ENCODE measurements at regions of chr17 and their contacts with region 1.

Region 1: DNA sequence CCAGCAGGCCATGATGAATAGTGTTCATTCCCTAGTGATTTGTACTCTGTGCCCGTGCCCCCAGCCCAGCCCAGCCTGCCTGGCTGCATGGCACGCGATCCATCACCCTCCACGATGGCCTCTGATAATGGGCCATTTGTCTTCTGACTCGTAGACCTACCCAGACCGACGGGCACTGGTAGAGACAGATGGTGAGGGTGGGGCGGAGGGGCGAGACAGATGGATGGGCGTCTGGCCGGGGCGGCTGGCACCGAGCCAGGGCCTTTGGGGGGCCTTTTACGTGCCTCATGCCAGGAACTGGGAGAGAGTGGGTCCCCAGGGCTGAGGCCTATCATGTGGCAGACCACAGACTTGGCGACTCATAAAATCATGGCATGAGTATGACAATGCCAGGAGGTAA is 25.4 kb downstream of the CRHR1 start:
- DNase-seq: no peak
- ATAC-seq: no peak
- H3K4me3 ChIP-seq: no peak overlapping the region
- H3K27ac ChIP-seq: no peak overlapping the region
- H3K4me1 ChIP-seq: no peaks in the 10 kb centered on the region
- H3K27me3 ChIP-seq: no peaks in the 10 kb centered on the region

Region 2: DNA sequence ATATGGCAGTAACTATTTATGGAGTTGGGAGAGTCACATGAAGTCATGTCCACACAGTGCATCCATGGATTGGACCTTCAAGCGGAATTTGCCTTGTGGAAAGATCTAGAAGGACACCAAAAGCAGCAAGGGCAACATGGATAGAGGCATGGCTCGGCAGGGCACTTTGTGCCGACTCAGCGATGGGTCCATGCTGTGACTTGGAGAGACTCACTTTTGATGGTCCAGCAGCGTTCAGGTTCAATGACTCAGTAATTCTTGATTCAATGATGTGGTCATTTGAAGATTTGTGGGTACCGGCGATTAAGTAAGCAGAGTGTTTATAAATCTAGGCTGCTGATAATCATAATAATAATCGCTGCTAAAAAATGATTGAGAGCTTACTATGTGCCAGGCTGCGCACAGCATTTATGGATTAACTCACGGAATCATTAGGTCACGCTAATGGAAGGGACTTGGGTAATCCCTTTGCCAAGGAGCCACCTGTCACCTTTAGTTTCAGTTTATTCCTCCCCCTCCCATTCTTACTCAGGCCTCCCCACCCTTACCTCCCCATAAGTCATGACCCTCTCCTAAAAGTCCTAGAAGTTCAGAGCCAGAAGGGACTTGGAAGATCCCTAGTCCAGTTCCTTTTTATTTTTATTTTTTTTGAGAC is 152.8 kb before region 1 on chr17:
- intact Hi-C with region 1: loop called in 1 of 2 experiments (anchors 5 kb)
- DNase-seq: peak in 1 of 2 donors; percentile 47
- ATAC-seq: no peak
- H3K4me3 ChIP-seq: no peak overlapping the region
- H3K27ac ChIP-seq: no peak overlapping the region
- H3K4me1 ChIP-seq: no peaks in the 10 kb centered on the region
- H3K27me3 ChIP-seq: no peaks in the 10 kb centered on the region

Region 3: DNA sequence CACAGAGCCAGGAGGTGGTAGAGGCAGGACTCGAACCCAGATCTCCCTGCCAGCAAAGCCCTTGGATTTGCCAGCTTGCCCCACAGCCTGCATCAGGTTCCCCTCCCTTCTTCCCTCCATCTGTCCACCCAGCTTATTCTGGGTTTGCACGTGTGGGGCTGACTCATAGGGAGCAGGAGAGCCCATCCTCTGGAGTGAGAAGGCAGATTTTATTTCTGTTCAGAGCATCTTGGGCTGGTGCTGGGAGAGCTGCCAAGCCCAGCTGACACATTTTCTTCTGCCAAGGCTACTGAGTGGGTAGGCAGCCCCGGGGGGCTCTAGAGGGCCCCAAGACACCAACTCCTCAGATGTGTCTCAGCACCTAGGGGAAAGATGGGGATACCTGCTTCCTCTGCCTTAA is 131.7 kb before region 1 on chr17:
- intact Hi-C with region 1: no loop called
- DNase-seq: no peak
- ATAC-seq: no peak
- H3K4me3 ChIP-seq: no peak overlapping the region
- H3K27ac ChIP-seq: no peak overlapping the region
- H3K4me1 ChIP-seq: no peaks in the 10 kb centered on the region
- H3K27me3 ChIP-seq: no peaks in the 10 kb centered on the region

Measured in aorta (tissue), 5 donors.